ENCODE measurements at regions of chr17 and their contacts with region 1.

Region 1: DNA sequence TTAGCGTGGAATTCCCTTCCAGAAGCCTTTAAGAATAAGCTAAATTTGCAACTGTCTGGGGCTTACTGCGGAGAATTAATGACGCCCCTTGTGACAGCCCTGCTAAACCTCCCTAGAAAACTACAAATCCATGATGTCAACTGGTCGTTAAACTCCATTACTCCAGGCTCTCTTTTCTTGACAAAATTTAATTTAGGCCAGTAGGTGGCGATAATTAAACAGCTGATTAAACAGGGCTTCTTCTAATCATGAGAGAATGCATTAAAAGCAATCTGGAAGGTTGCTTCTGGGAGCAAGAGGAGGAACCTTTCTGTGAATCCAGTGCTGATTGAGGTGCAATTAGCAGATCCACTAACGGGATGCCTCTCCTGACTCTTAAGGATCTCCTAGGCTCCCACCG is 8.1 kb upstream of the NLRP1 start:
- DNase-seq: peak; percentile 80
- H3K4me3 ChIP-seq: no peak overlapping the region
- H3K27ac ChIP-seq: no peak overlapping the region
- H3K4me1 ChIP-seq: no peaks in the 10 kb centered on the region
- H3K27me3 ChIP-seq: peaks cover 52% of the 10 kb centered on the region
- CTCF ChIP-seq: peak; percentile 71

Region 2: GRCh38 chr17:6413065-6413464 is 820.7 kb after region 1 on chr17:
- CTCF ChIA-PET with region 1: interaction called, 13 read pairs
- POLR2A ChIA-PET with region 1: no interaction called
- intact Hi-C with region 1: no loop called
- DNase-seq: peak; percentile 70
- H3K4me3 ChIP-seq: no peak overlapping the region
- H3K27ac ChIP-seq: no peak overlapping the region
- H3K4me1 ChIP-seq: no peaks in the 10 kb centered on the region
- H3K27me3 ChIP-seq: peaks cover 14% of the 10 kb centered on the region
- CTCF ChIP-seq: peak; percentile 60

Region 3: GRCh38 chr17:6421700-6422604 is 829.6 kb after region 1 on chr17:
- CTCF ChIA-PET with region 1: interaction called, 3 read pairs
- POLR2A ChIA-PET with region 1: no interaction called
- intact Hi-C with region 1: loop called (anchors 1 kb)
- DNase-seq: peak; percentile 81
- H3K4me3 ChIP-seq: no peak overlapping the region
- H3K27ac ChIP-seq: no peak overlapping the region
- H3K4me1 ChIP-seq: no peaks in the 10 kb centered on the region
- H3K27me3 ChIP-seq: peaks cover 18% of the 10 kb centered on the region
- CTCF ChIP-seq: peak; percentile 87